ENCODE measurements at regions of chr11 and their contacts with region 1.

Region 1: GRCh38 chr11:44977476-44977984 is 26.8 kb upstream of the TP53I11 start:
- DNase-seq: no peak
- H3K4me3 ChIP-seq: no peak overlapping the region
- H3K27ac ChIP-seq: no peak overlapping the region
- H3K4me1 ChIP-seq: peaks cover 0 to 27% (median 18%) of the 10 kb centered on the region in 4 experiments; a peak in 6 of 7 replicates
- H3K27me3 ChIP-seq: no peaks in the 10 kb centered on the region
- CTCF ChIP-seq: peak; percentile 57 to 83 (median 79)
- EP300 ChIP-seq: no peak
- POLR2A ChIP-seq: no peak
- RAD21 ChIP-seq: peak; percentile 48 to 69

Region 2: DNA sequence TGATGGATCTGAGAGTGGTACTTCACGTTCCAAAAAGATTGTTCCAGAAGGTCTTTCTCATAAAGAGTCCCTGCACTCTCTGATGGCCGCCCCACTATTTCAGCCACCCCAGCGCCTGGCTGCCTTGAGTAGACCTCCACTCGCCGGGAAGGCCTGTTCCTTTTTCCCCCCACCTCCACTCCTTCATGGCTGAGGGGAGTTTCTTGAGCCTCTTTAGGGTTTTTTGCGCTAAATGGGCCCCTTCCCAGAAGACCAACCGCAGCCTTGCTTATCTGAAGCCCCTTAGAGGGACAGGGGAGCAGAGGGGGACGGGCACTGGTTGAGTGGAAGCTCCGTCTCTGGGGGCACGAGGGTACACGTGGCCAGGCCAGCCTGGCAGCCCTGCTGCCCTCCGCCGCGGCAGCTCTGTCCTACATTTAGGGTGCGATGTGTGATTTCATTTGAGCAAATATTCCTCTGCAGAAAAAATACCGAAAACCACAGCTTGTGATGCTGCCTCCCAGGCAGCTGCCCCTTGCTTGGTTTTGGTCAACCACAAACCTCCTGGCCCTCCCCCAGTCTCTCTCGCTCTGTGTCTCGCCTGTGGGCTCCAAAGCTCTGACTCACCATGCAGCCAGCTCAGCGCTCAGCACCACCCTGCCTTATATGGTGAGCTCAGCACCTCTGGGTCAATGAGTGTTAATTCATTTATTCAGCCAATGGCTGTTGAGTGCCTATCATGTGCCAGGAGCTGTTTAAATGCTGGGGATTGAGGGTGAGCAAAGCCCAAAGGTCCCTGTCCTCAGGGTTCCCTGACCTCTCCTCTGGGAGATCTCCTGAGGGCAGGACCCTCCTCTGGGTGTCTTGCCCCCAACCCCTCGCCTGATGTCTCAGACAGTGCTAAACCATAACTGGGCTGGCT is 115.4 kb before region 1 on chr11:
- CTCF ChIA-PET with region 1: no interaction called
- POLR2A ChIA-PET with region 1: no interaction called
- DNase-seq: peak in 1 of 2 experiments; percentile 85
- H3K4me3 ChIP-seq: no peak overlapping the region; a peak in 2 of 8 replicates
- H3K27ac ChIP-seq: peak overlapping the region; percentile 59; the same call in 1 of the 2 replicates
- H3K4me1 ChIP-seq: peaks cover 33 to 55% (median 40%) of the 10 kb centered on the region in 4 experiments
- H3K27me3 ChIP-seq: no peaks in the 10 kb centered on the region
- CTCF ChIP-seq: no peak
- EP300 ChIP-seq: peak in 1 of 2 experiments; percentile 70; a peak in 1 of 3 replicates
- POLR2A ChIP-seq: peak in 1 of 2 experiments; percentile 37; a peak in 2 of 3 replicates
- RAD21 ChIP-seq: no peak

Region 3: GRCh38 chr11:44964526-44965209 is 12.9 kb before region 1 on chr11:
- CTCF ChIA-PET with region 1: interaction called, 261 read pairs
- POLR2A ChIA-PET with region 1: interaction called, 16 read pairs
- DNase-seq: no peak
- H3K4me3 ChIP-seq: no peak overlapping the region
- H3K27ac ChIP-seq: no peak overlapping the region
- H3K4me1 ChIP-seq: peaks cover 13 to 44% (median 28%) of the 10 kb centered on the region in 4 experiments
- H3K27me3 ChIP-seq: no peaks in the 10 kb centered on the region; a peak in 2 of 7 replicates
- CTCF ChIP-seq: no peak
- EP300 ChIP-seq: no peak
- POLR2A ChIP-seq: no peak
- RAD21 ChIP-seq: no peak; a peak in 1 of 4 replicates

Region 4: GRCh38 chr11:44993971-44994704 is 16.6 kb after region 1 on chr11:
- CTCF ChIA-PET with region 1: interaction called, 49 read pairs
- POLR2A ChIA-PET with region 1: interaction called, 4 read pairs
- DNase-seq: peak in 1 of 2 experiments; percentile 39
- H3K4me3 ChIP-seq: no peak overlapping the region
- H3K27ac ChIP-seq: no peak overlapping the region
- H3K4me1 ChIP-seq: no peaks in the 10 kb centered on the region
- H3K27me3 ChIP-seq: no peaks in the 10 kb centered on the region
- CTCF ChIP-seq: no peak
- EP300 ChIP-seq: no peak
- POLR2A ChIP-seq: no peak
- RAD21 ChIP-seq: no peak

Measured in H1 (cell line).